ENCODE measurements at regions of chr19 and their contacts with region 1.

Region 1: DNA sequence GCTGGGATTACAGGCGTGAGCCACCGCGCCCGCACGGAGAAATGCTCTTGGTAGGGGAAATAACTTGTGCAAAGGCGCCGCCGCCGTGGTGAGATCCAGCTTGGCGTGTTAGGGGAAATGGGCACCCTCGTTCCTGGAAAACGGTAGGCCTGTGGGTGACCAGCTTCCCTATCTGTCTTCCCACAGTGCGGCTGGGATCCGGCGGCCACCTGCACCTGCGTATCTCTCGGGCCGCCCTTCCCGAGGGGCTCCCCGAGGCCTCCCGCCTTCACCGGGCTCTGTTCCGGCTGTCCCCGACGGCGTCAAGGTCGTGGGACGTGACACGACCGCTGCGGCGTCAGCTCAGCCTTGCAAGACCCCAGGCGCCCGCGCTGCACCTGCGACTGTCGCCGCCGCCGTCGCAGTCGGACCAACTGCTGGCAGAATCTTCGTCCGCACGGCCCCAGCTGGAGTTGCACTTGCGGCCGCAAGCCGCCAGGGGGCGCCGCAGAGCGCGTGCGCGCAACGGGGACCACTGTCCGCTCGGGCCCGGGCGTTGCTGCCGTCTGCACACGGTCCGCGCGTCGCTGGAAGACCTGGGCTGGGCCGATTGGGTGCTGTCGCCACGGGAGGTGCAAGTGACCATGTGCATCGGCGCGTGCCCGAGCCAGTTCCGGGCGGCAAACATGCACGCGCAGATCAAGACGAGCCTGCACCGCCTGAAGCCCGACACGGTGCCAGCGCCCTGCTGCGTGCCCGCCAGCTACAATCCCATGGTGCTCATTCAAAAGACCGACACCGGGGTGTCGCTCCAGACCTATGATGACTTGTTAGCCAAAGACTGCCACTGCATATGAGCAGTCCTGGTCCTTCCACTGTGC is 2.4 kb downstream of the GDF15 start:
- DNase-seq: peak; percentile 95

Region 2: GRCh38 chr19:17719730-17720496 is 668.4 kb before region 1 on chr19:
- intact Hi-C with region 1: loop called in 1 of 2 experiments (anchors 10 kb)
- DNase-seq: no peak

Region 3: DNA sequence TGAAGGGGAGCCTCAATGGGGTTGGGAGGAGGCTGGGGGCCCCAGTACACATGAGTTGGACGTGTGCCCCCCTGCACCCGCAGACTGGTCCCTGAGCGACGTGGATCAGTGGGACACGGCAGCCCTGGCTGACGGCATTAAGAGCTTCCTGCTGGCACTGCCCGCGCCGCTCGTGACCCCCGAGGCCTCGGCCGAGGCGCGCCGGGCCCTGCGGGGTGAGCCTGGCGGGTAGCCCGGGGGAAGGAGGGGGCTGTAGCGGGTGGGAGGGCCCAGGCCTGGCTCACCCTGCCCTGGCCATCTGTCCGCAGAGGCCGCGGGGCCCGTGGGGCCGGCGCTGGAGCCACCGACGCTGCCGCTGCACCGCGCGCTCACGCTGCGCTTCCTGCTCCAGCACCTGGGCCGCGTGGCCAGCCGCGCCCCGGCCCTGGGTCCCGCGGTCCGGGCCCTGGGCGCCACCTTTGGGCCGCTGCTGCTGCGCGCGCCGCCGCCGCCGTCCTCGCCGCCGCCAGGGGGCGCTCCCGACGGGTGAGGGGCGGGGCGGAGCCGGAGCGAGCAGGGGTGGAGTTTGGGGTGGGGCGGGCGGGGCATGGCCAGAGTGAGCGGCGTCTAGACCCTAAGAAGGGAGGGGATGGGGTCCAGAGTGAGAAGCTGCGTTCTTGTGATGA is 227.2 kb before region 1 on chr19:
- intact Hi-C with region 1: no loop called
- DNase-seq: peak; percentile 92

Region 4: GRCh38 chr19:18401580-18402112 is 13.3 kb after region 1 on chr19:
- intact Hi-C with region 1: no loop called
- DNase-seq: peak; percentile 92